Vagina (tissue), 2 donors: ENCODE measurements at regions of chr15 and their contacts with region 1.

Region 1: DNA sequence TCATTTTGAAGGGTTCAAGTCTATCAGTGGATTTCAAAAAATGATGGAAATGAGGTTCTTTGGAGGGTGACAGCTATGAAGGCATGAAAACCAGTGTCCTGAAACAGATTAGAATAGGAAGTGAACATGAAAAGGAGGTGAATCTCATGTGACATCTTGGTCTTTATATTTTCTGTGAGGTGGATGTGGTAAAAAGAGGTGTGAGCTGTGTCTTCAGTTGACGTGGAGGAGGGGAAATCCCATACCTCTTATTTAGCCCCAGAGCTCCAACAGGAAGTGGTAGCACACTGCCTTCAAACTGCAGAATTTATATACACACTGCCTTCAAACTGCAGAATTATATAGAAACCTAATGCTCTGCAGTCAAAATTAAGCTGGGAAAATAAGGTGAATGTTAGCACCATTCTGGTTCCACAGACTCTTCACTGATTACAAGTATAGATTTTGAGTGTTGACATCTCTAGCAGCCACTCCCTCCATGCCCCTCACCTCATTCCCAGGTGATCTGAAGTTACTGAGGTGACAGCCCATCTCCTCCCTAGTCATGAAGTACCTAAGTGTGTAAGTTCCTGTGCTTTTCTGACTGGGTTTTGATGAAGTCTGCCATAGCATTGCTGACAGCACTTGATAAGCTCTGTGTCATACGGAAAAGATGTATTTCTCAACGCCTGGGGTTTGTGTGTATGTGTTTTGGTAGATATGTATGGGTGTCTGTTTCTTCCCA is 2.7 kb downstream of the RAB8B start:
- DNase-seq: no peak
- H3K4me3 ChIP-seq: no peak overlapping the region
- H3K27ac ChIP-seq: no peak overlapping the region
- H3K4me1 ChIP-seq: peaks cover 58% of the 10 kb centered on the region
- H3K27me3 ChIP-seq: no peaks in the 10 kb centered on the region
- CTCF ChIP-seq: no peak
- POLR2A ChIP-seq: no peak

Region 2: GRCh38 chr15:63246691-63247464 is 54.8 kb after region 1 on chr15:
- intact Hi-C with region 1: loop called (anchors 10 kb)
- DNase-seq: no peak
- H3K4me3 ChIP-seq: no peak overlapping the region
- H3K27ac ChIP-seq: no peak overlapping the region
- H3K4me1 ChIP-seq: peaks cover 38% of the 10 kb centered on the region
- H3K27me3 ChIP-seq: no peaks in the 10 kb centered on the region
- CTCF ChIP-seq: no peak
- POLR2A ChIP-seq: no peak

Region 3: DNA sequence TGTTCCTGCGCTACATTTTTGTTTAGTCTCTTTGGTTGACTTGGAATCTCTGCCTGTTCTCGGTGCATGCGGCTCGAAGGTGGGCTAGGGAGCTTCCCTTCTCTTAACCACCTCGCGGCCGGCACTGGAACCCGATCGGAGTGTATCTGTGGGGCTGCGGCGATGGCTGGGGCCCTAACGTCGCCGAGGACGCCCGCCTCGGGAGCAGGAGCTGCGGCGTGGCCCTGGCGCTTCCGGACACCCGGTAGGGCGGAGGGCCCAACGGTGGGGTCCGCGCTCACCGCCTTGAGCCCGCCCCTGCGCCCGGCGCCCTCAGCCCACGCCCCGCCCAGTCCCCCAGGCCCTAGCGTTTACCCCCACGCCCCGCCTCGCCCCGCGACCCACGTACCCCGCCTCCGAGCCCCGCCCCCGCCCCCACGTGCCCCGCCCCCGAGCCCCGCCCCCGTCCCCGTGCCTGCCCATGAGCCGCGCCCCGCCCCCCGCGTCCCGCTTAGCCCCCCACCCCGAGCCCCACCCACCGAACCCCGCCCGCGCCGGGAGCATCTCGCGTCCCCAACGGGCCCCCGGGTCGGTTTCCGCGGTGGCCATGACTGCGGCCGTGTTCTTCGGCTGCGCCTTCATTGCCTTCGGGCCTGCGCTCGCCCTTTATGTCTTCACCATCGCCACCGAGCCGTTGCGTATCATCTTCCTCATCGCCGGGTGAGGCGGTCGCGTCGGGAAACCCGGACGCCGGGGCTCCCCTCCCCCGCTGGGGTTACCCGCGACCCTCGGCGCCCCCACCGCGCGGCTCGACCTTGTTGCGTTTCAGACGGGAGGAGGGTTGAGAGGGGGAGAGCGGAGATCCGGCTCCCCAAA is 85.2 kb after region 1 on chr15 and contains the start of gene APH1B:
- intact Hi-C with region 1: loop called (anchors 5 kb)
- DNase-seq: no peak
- H3K4me3 ChIP-seq: peak within 1 kb of the TSS; percentile 73 to 92
- H3K27ac ChIP-seq: peak within 1 kb of the TSS; percentile 94
- H3K4me1 ChIP-seq: peaks cover 9% of the 10 kb centered on the region
- H3K27me3 ChIP-seq: no peaks in the 10 kb centered on the region
- CTCF ChIP-seq: peak in 1 of 3 experiments; percentile 15
- POLR2A ChIP-seq: peak in 1 of 2 donors; percentile 63
- total RNA-seq, gene APH1B: 22.8 TPM